PC-9 (cell line): ENCODE measurements at regions of chr3 and their contacts with region 1.

Region 1: GRCh38 chr3:153595186-153595815 is 433.3 kb downstream of the RAP2B start:
- DNase-seq: no peak
- H3K4me3 ChIP-seq: no peak overlapping the region
- H3K27ac ChIP-seq: no peak overlapping the region
- H3K4me1 ChIP-seq: peaks cover 16% of the 10 kb centered on the region
- H3K27me3 ChIP-seq: no peaks in the 10 kb centered on the region
- CTCF ChIP-seq: peak; percentile 83

Region 2: DNA sequence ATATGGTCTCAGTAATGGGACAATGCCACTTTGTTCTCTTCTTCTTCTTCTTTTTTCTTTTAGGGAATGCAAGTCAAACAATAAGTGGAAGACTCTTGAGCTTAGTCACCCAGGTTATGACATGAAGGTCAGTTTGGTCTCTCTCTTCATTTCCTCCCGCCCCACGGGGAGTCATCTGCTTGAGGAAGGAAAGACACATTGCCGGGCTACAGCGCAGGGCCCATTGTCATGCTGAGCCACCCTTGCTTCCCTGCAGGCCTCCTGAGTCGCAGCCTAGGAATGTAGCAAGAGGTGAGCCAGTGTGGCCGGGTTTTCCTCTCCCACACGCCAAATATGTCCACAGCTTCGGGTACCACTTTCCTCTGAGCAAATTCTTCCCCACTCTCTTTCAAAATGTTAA is 385.7 kb before region 1 on chr3:
- CTCF ChIA-PET with region 1: interaction called, 23 read pairs
- POLR2A ChIA-PET with region 1: no interaction called
- intact Hi-C with region 1: no loop called
- DNase-seq: peak; percentile 82 to 96
- H3K4me3 ChIP-seq: peak overlapping the region; percentile 35; the same call in 1 of the 2 replicates
- H3K27ac ChIP-seq: peak overlapping the region; percentile 84
- H3K4me1 ChIP-seq: peaks cover 34% of the 10 kb centered on the region
- H3K27me3 ChIP-seq: no peaks in the 10 kb centered on the region
- CTCF ChIP-seq: no peak

Region 3: GRCh38 chr3:153291056-153291685 is 304.1 kb before region 1 on chr3:
- CTCF ChIA-PET with region 1: no interaction called
- POLR2A ChIA-PET with region 1: no interaction called
- intact Hi-C with region 1: loop called (anchors 1 kb)
- DNase-seq: no peak
- H3K4me3 ChIP-seq: no peak overlapping the region
- H3K27ac ChIP-seq: no peak overlapping the region
- H3K4me1 ChIP-seq: no peaks in the 10 kb centered on the region
- H3K27me3 ChIP-seq: no peaks in the 10 kb centered on the region
- CTCF ChIP-seq: peak; percentile 38; the same call in 1 of the 2 replicates

Region 4: DNA sequence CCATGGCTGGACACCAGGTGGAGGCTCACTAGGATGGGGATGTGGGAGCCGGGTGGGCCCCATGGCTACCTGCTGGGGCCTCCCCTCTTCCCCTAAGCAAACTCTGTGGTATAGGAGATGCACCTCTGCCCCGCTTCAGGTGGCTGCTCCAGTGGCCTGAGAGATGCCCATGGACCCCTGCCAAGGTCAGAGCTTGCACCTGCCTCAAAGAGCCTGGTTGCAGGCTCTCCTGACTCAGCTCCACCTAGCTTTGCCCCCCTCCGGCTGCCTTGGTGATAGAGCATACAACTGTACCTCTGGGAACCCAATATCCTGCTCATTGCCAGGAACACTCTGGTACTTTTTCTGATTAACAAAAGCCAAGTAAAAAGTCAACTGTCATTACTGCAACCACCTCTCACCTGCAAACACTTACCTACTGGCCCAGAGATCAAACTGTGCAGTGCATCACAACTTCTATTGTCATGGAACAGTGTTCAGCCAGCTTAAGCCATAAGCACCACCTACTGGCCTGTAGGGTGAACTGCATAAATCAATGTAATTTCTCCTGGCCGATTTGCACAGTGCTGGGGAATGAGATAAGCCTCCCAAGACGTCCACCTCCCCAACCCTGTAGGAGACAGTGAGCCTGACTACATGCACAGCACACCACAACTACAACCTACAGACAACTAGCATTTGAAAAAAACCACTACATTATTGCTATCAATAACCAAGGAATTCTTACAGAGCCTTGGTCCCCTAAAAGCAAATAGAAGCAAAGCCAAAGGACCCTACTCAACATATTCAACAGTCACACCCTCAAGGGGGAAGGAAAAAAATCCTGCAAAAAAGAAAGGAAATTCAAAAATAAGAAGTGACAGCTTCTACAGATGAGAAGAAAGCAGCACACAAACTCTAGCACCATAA is 173.5 kb after region 1 on chr3:
- CTCF ChIA-PET with region 1: no interaction called
- POLR2A ChIA-PET with region 1: no interaction called
- intact Hi-C with region 1: loop called (anchors 5 kb)
- DNase-seq: peak; percentile 38 to 50
- H3K4me3 ChIP-seq: no peak overlapping the region
- H3K27ac ChIP-seq: no peak overlapping the region
- H3K4me1 ChIP-seq: 0 out of 2 replicates have a peak, but pooled peaks cover 9% of the 10 kb centered on the region
- H3K27me3 ChIP-seq: no peaks in the 10 kb centered on the region
- CTCF ChIP-seq: peak; percentile 93

Region 5: GRCh38 chr3:153927107-153927506 is 331.8 kb after region 1 on chr3:
- CTCF ChIA-PET with region 1: no interaction called
- POLR2A ChIA-PET with region 1: no interaction called
- intact Hi-C with region 1: loop called (anchors 10 kb)
- DNase-seq: no peak
- H3K4me3 ChIP-seq: no peak overlapping the region
- H3K27ac ChIP-seq: no peak overlapping the region
- H3K4me1 ChIP-seq: no peaks in the 10 kb centered on the region
- H3K27me3 ChIP-seq: no peaks in the 10 kb centered on the region
- CTCF ChIP-seq: peak; percentile 60

Region 6: DNA sequence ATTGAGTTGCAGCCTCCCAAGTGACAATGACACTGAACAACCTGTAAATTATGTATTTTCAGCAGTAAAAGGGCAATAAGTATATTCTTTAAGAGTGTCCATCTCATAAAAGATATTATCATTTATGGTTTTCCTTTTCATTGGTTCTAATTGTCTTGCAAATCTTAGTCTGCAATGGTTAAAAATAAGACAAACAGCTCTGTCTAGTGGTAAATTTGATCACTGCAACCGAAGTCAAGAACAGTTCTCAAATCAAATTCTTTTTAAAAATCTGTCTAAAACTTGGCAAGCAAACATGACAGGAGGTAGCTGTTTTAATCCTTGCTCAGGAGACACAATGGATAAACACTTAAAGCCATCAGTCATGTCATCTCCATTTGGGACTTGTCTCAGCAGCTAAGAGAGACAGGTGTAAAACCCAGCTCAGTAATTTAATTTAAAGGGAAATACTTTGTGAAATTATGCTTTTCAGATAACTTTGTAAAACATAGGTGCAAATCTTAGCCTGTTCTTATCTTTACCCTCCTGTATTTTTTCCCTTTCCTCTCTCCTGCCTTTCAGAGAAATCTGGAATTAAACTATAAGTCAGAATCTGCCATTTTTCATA is 375.5 kb after region 1 on chr3:
- CTCF ChIA-PET with region 1: no interaction called
- POLR2A ChIA-PET with region 1: no interaction called
- intact Hi-C with region 1: loop called (anchors 5 kb)
- DNase-seq: no peak
- H3K4me3 ChIP-seq: no peak overlapping the region
- H3K27ac ChIP-seq: no peak overlapping the region
- H3K4me1 ChIP-seq: no peaks in the 10 kb centered on the region
- H3K27me3 ChIP-seq: no peaks in the 10 kb centered on the region
- CTCF ChIP-seq: peak; percentile 69